Natural killer cell (primary cell): ENCODE measurements at regions of chr2 and their contacts with region 1.

Region 1: GRCh38 chr2:241315093-241315878 is at the start of gene HDLBP:
- DNase-seq: peak; percentile 100
- ATAC-seq: peak; percentile 64 to 86 (median 71)
- H3K4me3 ChIP-seq: peak within 1 kb of the TSS; percentile 98
- H3K4me3 Mint-ChIP-seq: peak within 1 kb of the TSS; percentile 97
- H3K27ac ChIP-seq: peak within 1 kb of the TSS; percentile 100
- H3K27ac Mint-ChIP-seq: peak within 1 kb of the TSS; percentile 96 to 99
- H3K4me1 ChIP-seq: peaks cover 32% of the 10 kb centered on the region
- H3K4me1 Mint-ChIP-seq: peaks cover 61 to 78% of the 10 kb centered on the region in 2 donors
- H3K27me3 ChIP-seq: no peaks in the 10 kb centered on the region
- H3K27me3 Mint-ChIP-seq: no peaks in the 10 kb centered on the region
- CTCF ChIP-seq: peak; percentile 21
- total RNA-seq, gene HDLBP: 170 to 200 (median 177) TPM

Region 2: GRCh38 chr2:240560480-240561326 is 754.6 kb before region 1 on chr2:
- intact Hi-C with region 1: loop called (anchors 10 kb)
- DNase-seq: peak; percentile 98 to 99
- ATAC-seq: peak; percentile 64 to 85 (median 67)
- H3K4me3 ChIP-seq: peak overlapping the region; percentile 62
- H3K4me3 Mint-ChIP-seq: peak overlapping the region; percentile 93
- H3K27ac ChIP-seq: peak overlapping the region; percentile 96
- H3K27ac Mint-ChIP-seq: peak overlapping the region; percentile 99
- H3K4me1 ChIP-seq: peaks cover 78% of the 10 kb centered on the region
- H3K4me1 Mint-ChIP-seq: peaks cover 60 to 76% of the 10 kb centered on the region in 2 donors
- H3K27me3 ChIP-seq: no peaks in the 10 kb centered on the region
- H3K27me3 Mint-ChIP-seq: no peaks in the 10 kb centered on the region
- CTCF ChIP-seq: peak; percentile 39

Region 3: GRCh38 chr2:241217320-241218031 is 97.8 kb before region 1 on chr2:
- intact Hi-C with region 1: no loop called
- DNase-seq: peak; percentile 59 to 62
- ATAC-seq: peak; percentile 31 to 69 (median 61)
- H3K4me3 ChIP-seq: peak overlapping the region; percentile 42
- H3K4me3 Mint-ChIP-seq: peak overlapping the region; percentile 82
- H3K27ac ChIP-seq: peak overlapping the region; percentile 34
- H3K27ac Mint-ChIP-seq: peak overlapping the region in 1 of 2 donors; percentile 86
- H3K4me1 ChIP-seq: peaks cover 12% of the 10 kb centered on the region
- H3K4me1 Mint-ChIP-seq: peaks cover 12 to 16% of the 10 kb centered on the region in 2 donors
- H3K27me3 ChIP-seq: no peaks in the 10 kb centered on the region
- H3K27me3 Mint-ChIP-seq: no peaks in the 10 kb centered on the region
- CTCF ChIP-seq: no peak

Region 4: DNA sequence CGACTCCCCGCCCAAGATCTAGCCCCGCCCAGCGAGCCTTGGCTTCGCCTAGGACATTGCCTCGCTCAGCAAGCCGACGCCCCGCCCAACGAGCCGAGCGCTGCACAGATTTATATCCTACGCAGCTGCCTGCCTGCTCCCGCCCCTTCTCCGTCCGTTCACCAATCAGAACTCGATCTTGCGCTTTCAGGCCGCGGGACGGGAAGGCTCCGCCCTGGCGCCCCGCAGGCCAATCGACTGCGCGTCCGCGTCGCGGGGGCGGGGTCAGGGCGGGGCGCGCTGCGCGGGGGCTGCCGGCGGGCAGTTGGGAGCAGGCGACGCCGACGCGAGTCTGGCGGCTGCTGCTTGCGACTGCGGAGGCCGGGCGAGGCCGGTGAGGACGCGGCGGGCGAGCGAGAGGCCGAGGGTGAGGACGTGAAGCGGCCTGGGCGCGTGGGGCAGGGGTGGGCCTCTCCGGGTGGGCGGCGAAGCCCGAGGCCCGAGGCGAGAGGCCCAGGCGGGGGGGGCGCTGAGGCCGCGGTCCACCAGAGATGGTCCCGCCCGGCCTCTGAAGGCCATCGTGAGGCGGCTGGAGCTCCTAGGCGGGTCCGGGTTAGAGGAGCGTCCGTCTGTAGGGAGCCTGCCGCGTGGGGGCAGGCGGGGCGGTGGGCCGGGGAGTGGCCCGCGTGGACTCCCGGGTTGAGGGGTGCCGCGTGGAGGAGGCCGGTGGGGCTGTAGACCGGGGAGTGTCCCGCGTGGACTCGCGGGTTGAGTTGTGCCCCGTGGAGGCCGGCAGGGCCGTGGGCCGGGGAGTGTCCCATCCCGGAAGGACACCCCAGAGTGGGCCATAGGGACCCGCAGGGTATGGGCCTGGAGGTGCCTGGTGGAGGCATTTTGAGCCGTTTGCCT is 40.9 kb after region 1 on chr2 and contains the start of gene FARP2:
- intact Hi-C with region 1: loop called (anchors 1 kb)
- DNase-seq: peak; percentile 93 to 99
- ATAC-seq: peak; percentile 92 to 97 (median 92)
- H3K4me3 ChIP-seq: peak within 1 kb of the TSS; percentile 54
- H3K4me3 Mint-ChIP-seq: peak within 1 kb of the TSS; percentile 84
- H3K27ac ChIP-seq: peak within 1 kb of the TSS; percentile 66
- H3K27ac Mint-ChIP-seq: peak within 1 kb of the TSS; percentile 79 to 85
- H3K4me1 ChIP-seq: peaks cover 16% of the 10 kb centered on the region
- H3K4me1 Mint-ChIP-seq: peaks cover 7 to 26% of the 10 kb centered on the region in 2 donors
- H3K27me3 ChIP-seq: no peaks in the 10 kb centered on the region
- H3K27me3 Mint-ChIP-seq: no peaks in the 10 kb centered on the region
- CTCF ChIP-seq: no peak
- total RNA-seq, gene FARP2: 26.8 to 40.6 (median 31.6) TPM

Region 5: GRCh38 chr2:241508240-241509154 is 193.2 kb after region 1 on chr2 and contains the start of gene STK25:
- intact Hi-C with region 1: loop called (anchors 5 kb)
- DNase-seq: peak; percentile 92 to 98
- ATAC-seq: peak; percentile 94 to 98 (median 95)
- H3K4me3 ChIP-seq: peak within 1 kb of the TSS; percentile 70
- H3K4me3 Mint-ChIP-seq: peak within 1 kb of the TSS; percentile 83
- H3K27ac ChIP-seq: peak within 1 kb of the TSS; percentile 83
- H3K27ac Mint-ChIP-seq: peak within 1 kb of the TSS; percentile 80 to 82
- H3K4me1 ChIP-seq: peaks cover 24% of the 10 kb centered on the region
- H3K4me1 Mint-ChIP-seq: peaks cover 7 to 31% of the 10 kb centered on the region in 2 donors
- H3K27me3 ChIP-seq: no peaks in the 10 kb centered on the region
- H3K27me3 Mint-ChIP-seq: no peaks in the 10 kb centered on the region
- CTCF ChIP-seq: peak; percentile 23
- total RNA-seq, gene STK25: 110 to 140 (median 135) TPM

Region 6: DNA sequence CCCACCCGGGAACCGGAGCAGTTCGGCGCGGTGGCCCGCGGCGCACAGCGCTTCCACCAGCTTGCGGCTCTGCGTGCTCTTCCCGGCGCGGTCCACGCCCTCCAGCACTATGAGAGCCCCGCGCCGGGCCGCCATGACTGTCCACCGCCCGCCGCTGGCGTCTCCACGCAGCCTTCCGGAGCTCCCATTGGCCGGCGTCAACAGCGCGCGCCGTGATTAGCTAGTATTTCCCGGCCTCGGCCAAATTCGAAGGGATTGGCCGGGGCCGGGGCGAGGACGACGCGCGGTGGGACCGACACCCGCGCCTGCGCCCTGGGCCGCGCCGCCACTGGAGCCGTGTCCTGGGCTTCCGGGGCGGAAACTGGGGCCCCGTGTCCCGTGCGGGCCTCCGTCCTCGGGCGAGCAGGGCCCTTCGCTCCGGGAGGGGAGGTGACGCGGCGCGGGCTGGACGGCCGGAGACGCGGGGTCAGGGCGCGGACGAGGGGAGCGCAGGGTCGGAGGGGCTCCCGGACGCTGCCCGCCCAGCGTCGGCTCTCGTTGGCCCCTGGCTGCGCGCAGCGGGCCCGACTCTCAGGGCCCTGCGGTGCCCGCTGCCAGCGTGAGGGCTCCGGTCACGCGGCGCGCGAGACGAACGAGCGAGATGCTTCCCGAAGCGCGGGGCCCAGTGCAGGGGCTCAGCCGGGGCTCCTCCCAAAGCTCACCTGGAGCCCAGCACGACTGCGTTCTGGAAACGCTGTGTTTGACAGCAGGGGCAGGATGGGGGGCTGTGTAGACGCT is 371.6 kb after region 1 on chr2 and contains the start of gene DTYMK:
- intact Hi-C with region 1: loop called (anchors 1 kb)
- DNase-seq: peak; percentile 96 to 97
- ATAC-seq: peak; percentile 93 to 98 (median 93)
- H3K4me3 ChIP-seq: peak within 1 kb of the TSS; percentile 84
- H3K4me3 Mint-ChIP-seq: peak within 1 kb of the TSS; percentile 94
- H3K27ac ChIP-seq: peak within 1 kb of the TSS; percentile 55
- H3K27ac Mint-ChIP-seq: peak within 1 kb of the TSS; percentile 87 to 88
- H3K4me1 ChIP-seq: peaks cover 18% of the 10 kb centered on the region
- H3K4me1 Mint-ChIP-seq: peaks cover 26 to 28% of the 10 kb centered on the region in 2 donors
- H3K27me3 ChIP-seq: no peaks in the 10 kb centered on the region
- H3K27me3 Mint-ChIP-seq: no peaks in the 10 kb centered on the region
- CTCF ChIP-seq: no peak
- total RNA-seq, gene DTYMK: 15.4 to 17.5 (median 15.6) TPM

Region 7: GRCh38 chr2:241762933-241763369 is 447.7 kb after region 1 on chr2:
- intact Hi-C with region 1: loop called (anchors 5 kb)
- DNase-seq: peak; percentile 86 to 90
- ATAC-seq: peak; percentile 65 to 86 (median 79)
- H3K4me3 ChIP-seq: peak overlapping the region; percentile 17
- H3K4me3 Mint-ChIP-seq: peak overlapping the region; percentile 93
- H3K27ac ChIP-seq: peak overlapping the region; percentile 81
- H3K27ac Mint-ChIP-seq: peak overlapping the region; percentile 94 to 96
- H3K4me1 ChIP-seq: peaks cover 42% of the 10 kb centered on the region
- H3K4me1 Mint-ChIP-seq: peaks cover 35 to 41% of the 10 kb centered on the region in 2 donors
- H3K27me3 ChIP-seq: peaks cover 4% of the 10 kb centered on the region
- H3K27me3 Mint-ChIP-seq: peaks cover 0 to 9% of the 10 kb centered on the region in 2 donors
- CTCF ChIP-seq: no peak